ENCODE measurements at regions of chr15 and their contacts with region 1.

Region 1: DNA sequence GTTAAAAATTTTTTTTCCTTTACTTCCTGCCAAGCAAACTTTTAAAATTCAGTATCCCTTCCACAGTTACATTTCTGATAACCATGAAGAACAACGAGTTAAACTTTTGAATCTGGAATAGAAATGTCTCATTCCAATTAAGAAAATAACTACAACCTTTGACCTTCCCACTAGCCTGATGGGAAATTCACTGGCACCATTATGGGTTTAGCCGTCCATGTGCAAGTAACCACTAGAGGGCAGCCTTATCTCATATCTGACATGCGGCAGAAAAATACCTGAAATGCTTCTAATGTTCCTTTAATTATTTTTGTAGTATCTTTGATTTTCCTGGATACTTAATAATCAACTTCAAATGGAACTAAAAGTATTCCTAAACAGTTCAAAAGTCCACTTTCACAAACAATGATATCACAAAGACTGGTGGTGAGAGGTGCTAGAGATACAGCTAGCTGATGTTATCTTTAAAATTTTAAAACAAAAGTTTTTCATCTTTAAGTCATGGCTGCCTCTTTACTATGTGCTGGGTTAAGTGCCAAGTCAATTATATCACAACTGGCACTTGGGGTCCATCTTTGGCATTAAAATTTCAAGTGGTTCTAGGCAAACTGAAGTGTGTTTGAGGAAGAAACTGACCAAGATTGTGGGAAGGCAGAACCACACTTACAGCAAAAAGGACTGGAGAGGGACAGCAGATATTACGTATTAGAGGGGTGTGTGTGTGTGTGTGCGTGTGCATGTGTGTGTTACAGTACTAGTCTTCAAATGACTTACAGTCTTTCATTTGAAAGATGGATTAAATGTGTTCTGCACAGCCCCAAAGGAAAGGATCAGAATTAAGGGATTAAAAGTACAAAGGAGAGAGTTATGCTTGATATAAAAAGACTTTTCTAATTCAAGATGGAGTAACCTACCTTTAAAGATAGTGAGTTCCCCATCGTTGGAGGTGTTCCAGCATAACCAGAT is 107.1 kb upstream of the ICE2 start:
- DNase-seq: peak; percentile 42
- H3K4me3 Mint-ChIP-seq: peak overlapping the region; percentile 68
- H3K27ac Mint-ChIP-seq: peak overlapping the region; percentile 82
- H3K4me1 Mint-ChIP-seq: peaks cover 80% of the 10 kb centered on the region
- H3K27me3 Mint-ChIP-seq: peaks cover 14% of the 10 kb centered on the region

Region 2: GRCh38 chr15:60362321-60363086 is 223.5 kb before region 1 on chr15:
- intact Hi-C with region 1: loop called (anchors 2 kb)
- DNase-seq: peak; percentile 52
- H3K4me3 Mint-ChIP-seq: peak overlapping the region; percentile 18
- H3K27ac Mint-ChIP-seq: peak overlapping the region; percentile 75
- H3K4me1 Mint-ChIP-seq: peaks cover 28% of the 10 kb centered on the region
- H3K27me3 Mint-ChIP-seq: no peaks in the 10 kb centered on the region

Region 3: DNA sequence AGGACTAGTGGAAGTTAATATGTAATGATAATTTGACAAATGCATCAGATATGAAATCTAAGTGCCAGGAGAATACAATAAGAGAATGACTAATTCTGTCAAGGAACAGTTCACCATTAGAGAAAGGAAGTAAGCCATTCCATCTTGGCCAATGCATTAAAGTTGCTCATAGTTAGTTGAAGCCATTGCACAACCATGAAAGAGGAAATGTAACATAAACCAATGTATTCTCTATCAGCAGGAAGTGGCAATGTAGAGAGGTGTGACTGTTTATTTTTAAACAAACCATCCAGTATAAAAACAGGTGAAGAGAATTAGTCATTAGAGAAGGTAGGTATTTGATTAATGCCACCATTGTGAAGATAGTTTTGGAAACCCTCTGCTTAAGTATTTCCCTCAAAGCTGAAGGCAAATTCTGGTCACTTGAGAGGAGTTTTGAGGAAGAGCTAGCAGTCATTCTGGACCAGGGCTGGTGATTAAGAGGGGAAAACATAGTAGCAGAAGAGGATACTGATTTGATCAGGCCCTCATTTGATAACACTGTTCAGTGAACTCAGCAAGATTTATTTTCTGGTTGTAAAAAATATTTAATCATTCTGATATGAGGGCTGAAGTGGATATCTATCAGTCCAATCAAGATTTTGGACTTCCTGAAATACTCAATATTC is 177.5 kb before region 1 on chr15:
- intact Hi-C with region 1: no loop called
- DNase-seq: no peak
- H3K4me3 Mint-ChIP-seq: no peak overlapping the region
- H3K27ac Mint-ChIP-seq: peak overlapping the region; percentile 62
- H3K4me1 Mint-ChIP-seq: peaks cover 16% of the 10 kb centered on the region
- H3K27me3 Mint-ChIP-seq: peaks cover 7% of the 10 kb centered on the region

Region 4: DNA sequence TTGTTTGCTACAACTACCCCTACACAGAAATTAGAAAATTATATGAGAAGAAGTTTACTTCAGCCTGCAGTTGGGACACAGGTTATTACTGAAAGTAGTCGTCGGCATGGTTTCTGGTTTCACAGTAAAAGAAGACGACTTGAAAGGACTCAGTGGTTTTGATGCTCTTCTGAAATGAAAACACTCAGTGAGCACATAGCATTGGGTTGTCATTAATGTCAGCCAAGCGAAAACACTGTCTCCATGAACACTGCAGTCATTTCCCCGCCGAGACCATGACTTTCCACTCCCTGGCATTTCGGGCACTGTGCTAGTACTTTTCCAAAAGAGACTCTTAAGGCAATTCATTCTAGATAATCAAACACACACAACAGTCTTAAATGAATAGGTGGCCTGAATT is 37.9 kb before region 1 on chr15:
- intact Hi-C with region 1: loop called (anchors 1 kb)
- DNase-seq: peak; percentile 38
- H3K4me3 Mint-ChIP-seq: peak overlapping the region; percentile 63
- H3K27ac Mint-ChIP-seq: peak overlapping the region; percentile 91
- H3K4me1 Mint-ChIP-seq: peaks cover 79% of the 10 kb centered on the region
- H3K27me3 Mint-ChIP-seq: peaks cover 2% of the 10 kb centered on the region

Region 5: DNA sequence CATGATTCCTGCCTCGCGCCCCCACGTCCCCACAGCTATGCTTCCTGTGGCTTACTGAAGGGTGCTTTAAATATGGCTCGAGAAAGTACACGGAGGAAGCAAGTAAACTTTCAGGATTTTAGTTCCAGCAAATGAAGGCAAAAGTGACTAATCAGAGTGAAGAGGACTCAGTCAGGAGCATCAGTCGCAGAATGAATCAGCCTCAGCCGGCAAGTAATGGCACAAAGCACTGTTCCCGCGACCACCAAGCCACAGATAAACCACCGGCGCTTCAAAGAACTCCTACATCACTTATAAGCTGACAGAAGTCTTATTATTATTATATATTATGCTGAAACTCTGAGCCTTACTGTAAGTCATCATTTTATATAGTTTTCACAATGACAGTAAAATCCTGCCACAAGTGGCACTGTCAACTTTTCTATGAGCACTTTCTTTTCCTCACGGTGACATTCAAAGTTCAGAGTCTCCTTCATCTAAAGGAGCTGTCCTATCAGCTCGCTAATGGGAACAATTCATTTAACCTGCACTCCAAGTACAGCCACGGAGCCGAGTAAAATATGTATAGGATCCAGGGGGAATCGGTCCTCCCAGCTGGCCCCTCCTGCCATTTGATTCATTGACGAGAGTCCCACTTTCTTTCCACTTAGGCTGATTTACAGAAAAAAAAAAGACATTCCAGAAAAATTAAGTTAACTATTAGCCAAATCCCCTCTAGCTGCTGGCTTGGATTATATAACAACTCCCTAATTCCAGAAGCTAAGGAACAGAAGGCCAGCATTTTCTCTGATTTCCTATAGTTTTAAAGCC is 109.9 kb after region 1 on chr15:
- intact Hi-C with region 1: loop called (anchors 5 kb)
- DNase-seq: peak; percentile 35
- H3K4me3 Mint-ChIP-seq: peak overlapping the region; percentile 22
- H3K27ac Mint-ChIP-seq: peak overlapping the region; percentile 49
- H3K4me1 Mint-ChIP-seq: peaks cover 52% of the 10 kb centered on the region
- H3K27me3 Mint-ChIP-seq: peaks cover 25% of the 10 kb centered on the region

Region 6: GRCh38 chr15:60840306-60840702 is 254.3 kb after region 1 on chr15:
- intact Hi-C with region 1: loop called (anchors 2 kb)
- DNase-seq: no peak
- H3K4me3 Mint-ChIP-seq: no peak overlapping the region
- H3K27ac Mint-ChIP-seq: no peak overlapping the region
- H3K4me1 Mint-ChIP-seq: peaks cover 65% of the 10 kb centered on the region
- H3K27me3 Mint-ChIP-seq: peaks cover 57% of the 10 kb centered on the region

Region 7: DNA sequence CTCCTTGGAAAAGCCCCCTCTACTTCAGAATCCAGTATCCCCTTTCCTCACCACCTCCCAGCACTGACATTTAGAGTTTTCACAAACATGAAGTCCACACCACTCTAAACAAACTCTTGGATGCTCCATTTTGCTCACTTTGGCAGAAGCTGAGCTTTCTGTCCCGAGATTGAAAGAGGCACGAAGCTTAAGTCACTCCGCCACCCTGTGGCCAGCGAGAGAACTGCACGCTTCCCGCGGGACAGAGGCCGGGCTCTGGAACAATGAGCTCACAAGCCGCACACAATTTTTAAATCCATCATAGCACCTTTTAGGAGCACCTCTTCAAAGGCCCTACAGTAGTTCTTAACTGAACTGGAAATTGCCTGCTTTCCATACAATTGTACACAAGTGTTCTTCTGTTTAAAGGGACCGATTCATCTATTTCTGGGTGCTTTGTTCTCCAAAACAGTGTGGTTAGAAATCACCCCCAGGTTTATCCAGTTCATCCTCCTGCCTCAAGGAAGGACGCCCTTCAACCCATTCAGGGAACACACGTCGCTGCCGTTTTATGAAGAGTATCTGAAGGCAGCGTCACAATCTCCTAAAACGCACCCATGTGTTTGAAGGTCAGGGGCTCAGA is 1248.2 kb after region 1 on chr15:
- intact Hi-C with region 1: loop called (anchors 10 kb)
- DNase-seq: peak; percentile 51
- H3K4me3 Mint-ChIP-seq: no peak overlapping the region
- H3K27ac Mint-ChIP-seq: no peak overlapping the region
- H3K4me1 Mint-ChIP-seq: peaks cover 2% of the 10 kb centered on the region
- H3K27me3 Mint-ChIP-seq: peaks cover 19% of the 10 kb centered on the region